Activated naive CD4-positive, alpha-beta T cell treated with anti-CD3 and anti-CD28 coated beads for 36 hours (primary cell): ENCODE measurements at regions of chr21 and their contacts with region 1.

Region 1: GRCh38 chr21:34129039-34129891 is 55.9 kb downstream of the MRPS6 start:
- DNase-seq: peak; percentile 90
- H3K4me3 Mint-ChIP-seq: peak overlapping the region; percentile 60
- H3K27ac Mint-ChIP-seq: peak overlapping the region; percentile 92
- H3K4me1 Mint-ChIP-seq: peaks cover 83% of the 10 kb centered on the region
- H3K27me3 Mint-ChIP-seq: no peaks in the 10 kb centered on the region

Region 2: GRCh38 chr21:33915368-33916199 is 213.7 kb before region 1 on chr21 and contains the start of gene ATP5PO:
- CTCF ChIA-PET with region 1: interaction called, 3 read pairs
- intact Hi-C with region 1: loop called (anchors 1 kb)
- DNase-seq: peak; percentile 98
- H3K4me3 Mint-ChIP-seq: peak within 1 kb of the TSS; percentile 98
- H3K27ac Mint-ChIP-seq: peak within 1 kb of the TSS; percentile 95
- H3K4me1 Mint-ChIP-seq: peaks cover 27% of the 10 kb centered on the region
- H3K27me3 Mint-ChIP-seq: no peaks in the 10 kb centered on the region
- total RNA-seq, gene ATP5PO: 230 TPM

Region 3: DNA sequence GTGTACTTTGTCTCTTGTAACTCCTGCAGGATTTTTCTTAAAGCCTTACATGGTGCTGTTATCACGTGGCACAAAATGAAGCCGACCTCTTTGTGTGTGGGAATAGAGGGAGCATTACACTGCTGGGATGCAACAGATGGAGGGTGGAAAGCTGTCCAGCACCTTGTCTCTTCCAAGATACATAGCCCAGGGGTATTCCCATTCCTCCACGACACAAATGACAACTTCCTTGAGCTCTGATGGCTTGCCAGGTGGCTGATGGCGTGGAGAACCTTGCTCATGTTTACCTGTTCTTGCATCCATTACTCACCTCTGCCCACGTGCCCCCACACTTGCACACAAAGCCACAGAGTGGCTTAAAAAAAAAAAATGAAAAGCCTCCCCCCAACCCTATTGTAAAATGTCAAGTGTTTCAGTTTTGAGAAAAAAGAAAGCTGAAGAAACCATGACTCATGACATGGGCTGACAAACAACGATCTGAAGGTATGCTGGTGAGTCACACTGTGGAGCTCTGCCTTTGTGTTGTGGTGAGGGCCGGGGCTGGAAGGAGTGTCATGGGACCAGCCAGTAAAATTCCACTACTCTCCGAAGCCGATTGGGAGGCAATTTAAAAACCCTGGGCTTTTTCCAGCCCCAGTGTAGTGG is 181.7 kb before region 1 on chr21:
- CTCF ChIA-PET with region 1: interaction called, 4 read pairs
- intact Hi-C with region 1: loop called (anchors 1 kb)
- DNase-seq: peak; percentile 92
- H3K4me3 Mint-ChIP-seq: peak overlapping the region; percentile 65
- H3K27ac Mint-ChIP-seq: peak overlapping the region; percentile 97
- H3K4me1 Mint-ChIP-seq: peaks cover 77% of the 10 kb centered on the region
- H3K27me3 Mint-ChIP-seq: peaks cover 2% of the 10 kb centered on the region

Region 4: DNA sequence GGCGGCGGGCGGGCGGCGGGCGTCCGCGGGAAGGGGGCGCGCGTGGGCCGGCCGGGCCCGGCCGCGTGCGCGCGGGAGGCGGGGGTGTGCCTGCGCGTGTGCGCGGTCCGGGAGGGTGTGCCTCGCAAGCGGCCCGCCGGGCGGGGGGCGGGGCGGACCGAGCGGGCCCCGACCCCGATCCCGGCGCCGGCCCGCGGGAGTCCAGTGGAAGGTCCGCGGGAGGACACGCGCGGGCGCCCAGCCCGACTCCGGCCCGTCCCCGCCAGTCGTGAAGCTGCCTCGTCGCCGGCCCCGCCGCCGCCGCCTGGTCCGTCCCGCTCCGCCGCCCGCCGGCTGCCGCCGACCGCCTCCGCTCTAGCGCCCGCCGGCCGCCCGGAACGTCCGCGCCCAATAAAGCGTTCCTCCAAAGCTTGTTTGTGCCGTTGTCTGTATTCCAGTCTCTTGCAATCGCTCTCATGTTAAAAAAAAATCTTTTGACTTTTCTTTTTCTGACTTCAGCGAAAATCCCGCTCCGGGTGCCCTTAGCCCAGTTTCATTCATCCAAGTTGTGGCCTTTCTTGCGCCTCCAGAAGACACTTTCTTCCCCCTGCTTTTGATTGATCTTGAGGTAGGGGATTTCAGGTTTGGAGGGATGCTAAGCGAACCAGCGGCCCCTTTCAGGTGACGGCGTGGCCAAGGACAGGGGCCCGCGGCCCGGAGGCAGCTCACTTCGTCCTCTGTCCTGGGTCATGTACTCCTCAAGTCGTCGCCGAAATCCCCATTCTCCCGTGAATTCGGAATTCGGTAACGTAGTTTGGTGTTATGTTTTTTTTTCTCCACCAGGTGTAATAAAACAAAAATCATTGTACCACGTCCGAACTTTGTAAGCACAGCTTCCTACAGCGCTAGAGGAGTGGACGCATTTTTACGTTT is 55.1 kb before region 1 on chr21:
- CTCF ChIA-PET with region 1: interaction called, 4 read pairs
- intact Hi-C with region 1: loop called (anchors 2 kb)
- DNase-seq: peak; percentile 24
- H3K4me3 Mint-ChIP-seq: peak overlapping the region; percentile 88
- H3K27ac Mint-ChIP-seq: peak overlapping the region; percentile 86
- H3K4me1 Mint-ChIP-seq: peaks cover 46% of the 10 kb centered on the region
- H3K27me3 Mint-ChIP-seq: no peaks in the 10 kb centered on the region

Region 5: GRCh38 chr21:34202553-34203372 is 73.5 kb after region 1 on chr21:
- CTCF ChIA-PET with region 1: interaction called, 4 read pairs
- intact Hi-C with region 1: loop called (anchors 1 kb)
- DNase-seq: no peak
- H3K4me3 Mint-ChIP-seq: peak overlapping the region; percentile 61
- H3K27ac Mint-ChIP-seq: no peak overlapping the region
- H3K4me1 Mint-ChIP-seq: peaks cover 43% of the 10 kb centered on the region
- H3K27me3 Mint-ChIP-seq: no peaks in the 10 kb centered on the region